CD14-positive monocyte (primary cell): ENCODE measurements at regions of chr20 and their contacts with region 1.

Region 1: DNA sequence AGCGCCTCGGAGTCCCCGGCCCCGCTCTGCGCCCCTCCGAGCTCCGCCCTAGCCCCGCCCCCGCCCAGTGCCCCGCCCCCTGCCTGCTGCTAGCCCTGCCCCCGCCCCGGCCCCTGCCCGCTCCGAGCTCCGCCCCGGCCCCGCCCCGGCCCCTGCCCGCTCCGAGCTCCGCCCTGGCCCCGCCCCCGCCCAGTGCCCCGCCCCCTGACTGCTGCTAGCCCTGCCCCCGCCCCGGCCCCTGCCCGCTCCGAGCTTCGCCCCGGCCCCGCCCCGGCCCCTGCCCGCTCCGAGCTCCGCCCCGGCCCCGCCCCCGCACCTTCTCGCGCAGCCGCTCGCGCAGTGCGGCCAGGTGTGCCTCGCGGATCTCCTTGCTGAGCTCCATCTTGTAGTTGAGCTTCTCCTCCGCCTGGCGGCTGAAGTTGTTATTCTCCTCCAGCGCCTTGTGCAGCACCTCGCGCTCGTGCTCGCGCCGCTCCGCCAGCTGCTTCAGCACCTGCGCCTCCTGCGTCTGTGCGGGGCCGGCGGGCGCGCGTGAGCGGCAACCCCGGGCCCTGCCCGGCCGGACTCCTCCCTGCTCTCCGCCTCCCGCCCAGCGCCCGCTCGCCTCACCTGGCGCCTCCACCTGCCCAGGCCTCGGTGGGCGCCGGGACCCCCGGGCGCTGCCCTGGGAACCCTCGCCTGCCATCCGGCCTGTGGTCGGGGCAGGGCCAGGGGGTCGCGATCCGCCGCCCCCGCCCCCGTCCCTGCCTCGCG is 11.3 kb downstream of the STMN3 start:
- DNase-seq: peak; percentile 70 to 90 (median 76)
- H3K4me3 ChIP-seq: peak overlapping the region; percentile 74 to 93 (median 82)
- H3K4me3 Mint-ChIP-seq: peak overlapping the region; percentile 72 to 79
- H3K27ac ChIP-seq: peak overlapping the region; percentile 81 to 86
- H3K27ac Mint-ChIP-seq: peak overlapping the region in 5 of 7 donors; percentile 33 to 79 (median 63)
- H3K4me1 ChIP-seq: peaks cover 33 to 40% of the 10 kb centered on the region in 2 donors
- H3K4me1 Mint-ChIP-seq: peaks cover 33% of the 10 kb centered on the region
- H3K27me3 ChIP-seq: no peaks in the 10 kb centered on the region
- H3K27me3 Mint-ChIP-seq: peaks cover 6 to 18% (median 7%) of the 10 kb centered on the region in 3 donors
- CTCF ChIP-seq: peak; percentile 52

Region 2: GRCh38 chr20:63556873-63557478 is 85.0 kb before region 1 on chr20:
- intact Hi-C with region 1: no loop called
- DNase-seq: no peak
- H3K4me3 ChIP-seq: no peak overlapping the region
- H3K4me3 Mint-ChIP-seq: peak overlapping the region in 1 of 2 donors; percentile 35
- H3K27ac ChIP-seq: no peak overlapping the region
- H3K27ac Mint-ChIP-seq: no peak overlapping the region
- H3K4me1 ChIP-seq: peaks cover 15 to 22% of the 10 kb centered on the region in 2 donors
- H3K4me1 Mint-ChIP-seq: peaks cover 10% of the 10 kb centered on the region
- H3K27me3 ChIP-seq: peaks cover 2 to 66% of the 10 kb centered on the region in 2 donors
- H3K27me3 Mint-ChIP-seq: peaks cover 27 to 75% (median 58%) of the 10 kb centered on the region in 3 donors
- CTCF ChIP-seq: no peak

Region 3: GRCh38 chr20:63627129-63627750 is 14.7 kb before region 1 on chr20:
- intact Hi-C with region 1: loop called (anchors 1 kb)
- DNase-seq: peak; percentile 94 to 96 (median 95)
- H3K4me3 ChIP-seq: peak overlapping the region; percentile 91 to 96 (median 93)
- H3K4me3 Mint-ChIP-seq: peak overlapping the region; percentile 95 to 96
- H3K27ac ChIP-seq: peak overlapping the region; percentile 82 to 88
- H3K27ac Mint-ChIP-seq: peak overlapping the region; percentile 75 to 91 (median 83)
- H3K4me1 ChIP-seq: peaks cover 17 to 29% of the 10 kb centered on the region in 2 donors
- H3K4me1 Mint-ChIP-seq: peaks cover 30% of the 10 kb centered on the region
- H3K27me3 ChIP-seq: no peaks in the 10 kb centered on the region
- H3K27me3 Mint-ChIP-seq: peaks cover 0 to 2% (median 2%) of the 10 kb centered on the region in 3 donors
- CTCF ChIP-seq: no peak

Region 4: GRCh38 chr20:63942250-63942959 is 300.4 kb after region 1 on chr20:
- intact Hi-C with region 1: loop called in 1 of 2 experiments (anchors 5 kb)
- DNase-seq: peak; percentile 42 to 72 (median 67)
- H3K4me3 ChIP-seq: no peak overlapping the region
- H3K4me3 Mint-ChIP-seq: peak overlapping the region in 1 of 2 donors; percentile 80
- H3K27ac ChIP-seq: peak overlapping the region; percentile 24 to 47
- H3K27ac Mint-ChIP-seq: peak overlapping the region; percentile 70 to 93 (median 87)
- H3K4me1 ChIP-seq: peaks cover 35 to 42% of the 10 kb centered on the region in 2 donors
- H3K4me1 Mint-ChIP-seq: peaks cover 31% of the 10 kb centered on the region
- H3K27me3 ChIP-seq: no peaks in the 10 kb centered on the region
- H3K27me3 Mint-ChIP-seq: no peaks in the 10 kb centered on the region
- CTCF ChIP-seq: no peak